ENCODE measurements at regions of chr19 and their contacts with region 1.

Region 1: DNA sequence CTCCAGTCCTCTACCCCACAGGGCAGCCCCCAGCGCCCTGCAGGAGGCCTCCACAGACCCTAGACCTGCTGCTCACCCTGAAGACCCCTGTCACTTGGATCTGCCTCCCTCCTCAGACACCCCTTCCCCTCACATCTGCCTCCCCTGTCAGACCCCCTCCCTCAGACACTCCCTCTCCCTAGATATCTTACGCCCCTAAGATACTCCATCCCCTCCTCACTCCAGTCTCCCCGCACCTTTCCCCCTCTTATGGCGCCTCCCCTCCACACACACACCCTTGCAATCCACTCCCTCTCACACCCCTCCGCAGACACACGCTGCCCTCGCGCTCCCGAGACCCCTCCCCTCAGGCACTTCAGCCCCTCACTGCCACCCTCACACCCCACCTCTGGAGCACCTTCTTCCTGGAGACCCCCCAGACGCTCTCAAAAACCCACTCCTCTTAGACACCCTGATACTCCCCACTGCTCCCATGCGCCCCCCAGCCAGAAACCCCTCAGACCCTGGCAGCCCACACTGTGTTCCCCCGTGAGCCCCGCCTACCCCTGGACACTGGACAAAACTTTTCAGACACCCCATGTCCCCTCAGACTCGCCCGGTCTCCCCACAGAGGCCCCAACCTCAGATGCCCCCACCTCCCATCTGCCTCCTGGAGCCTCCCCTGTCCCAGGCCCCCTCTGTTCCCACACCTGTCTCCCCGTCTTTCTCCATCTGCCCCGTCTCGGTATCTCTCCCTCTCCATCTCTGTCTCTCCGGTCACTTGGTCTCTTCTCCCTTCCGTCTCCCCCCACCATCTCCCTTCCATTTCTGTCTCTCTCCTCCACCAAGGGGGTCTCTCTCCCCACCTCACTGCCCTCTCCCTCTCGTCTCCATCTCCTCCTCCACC is 14.5 kb downstream of the ERFL start:
- DNase-seq: no peak
- ATAC-seq: no peak
- H3K4me3 Mint-ChIP-seq: no peak overlapping the region
- H3K27ac Mint-ChIP-seq: no peak overlapping the region
- H3K4me1 Mint-ChIP-seq: peaks cover 28% of the 10 kb centered on the region
- H3K27me3 Mint-ChIP-seq: peaks cover 23% of the 10 kb centered on the region

Region 2: DNA sequence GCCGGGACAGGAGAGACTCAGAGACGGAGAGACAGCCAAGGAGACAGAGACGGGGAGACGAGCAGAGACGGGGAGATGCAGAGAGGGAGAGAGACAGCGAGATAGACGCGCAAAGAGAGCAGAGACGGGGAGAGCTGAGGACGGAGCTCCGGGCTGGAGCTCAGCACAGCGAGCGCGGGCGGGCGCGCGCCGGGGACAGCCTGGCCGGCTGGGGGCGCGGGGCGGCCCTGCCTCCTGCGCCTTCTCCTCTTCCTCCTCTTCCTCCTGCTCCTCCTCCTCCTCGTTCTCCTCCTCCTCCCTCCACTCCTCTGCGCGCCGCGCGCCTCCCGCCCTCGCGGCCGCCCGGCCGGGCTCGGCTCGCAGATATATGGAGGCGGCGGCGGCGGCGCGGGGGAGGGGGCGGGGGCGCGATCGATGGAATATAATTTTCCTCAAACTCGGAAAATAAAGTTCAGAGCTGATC is 14.5 kb after region 1 on chr19 and contains the start of gene ERFL:
- CTCF ChIA-PET with region 1: no interaction called
- POLR2A ChIA-PET with region 1: no interaction called
- intact Hi-C with region 1: loop called in 1 of 2 experiments (anchors 2 kb)
- DNase-seq: peak; percentile 56
- ATAC-seq: peak; percentile 54
- H3K4me3 Mint-ChIP-seq: peak within 1 kb of the TSS; percentile 77
- H3K27ac Mint-ChIP-seq: peak within 1 kb of the TSS; percentile 81
- H3K4me1 Mint-ChIP-seq: peaks cover 20% of the 10 kb centered on the region
- H3K27me3 Mint-ChIP-seq: peaks cover 1% of the 10 kb centered on the region
- total RNA-seq, gene ERFL: 1.7 to 1.9 TPM

Region 3: GRCh38 chr19:41945135-41945766 is 31.5 kb after region 1 on chr19:
- CTCF ChIA-PET with region 1: no interaction called
- POLR2A ChIA-PET with region 1: no interaction called
- intact Hi-C with region 1: no loop called
- DNase-seq: peak; percentile 95
- ATAC-seq: peak; percentile 92
- H3K4me3 Mint-ChIP-seq: peak overlapping the region; percentile 41
- H3K27ac Mint-ChIP-seq: peak overlapping the region; percentile 96
- H3K4me1 Mint-ChIP-seq: peaks cover 50% of the 10 kb centered on the region
- H3K27me3 Mint-ChIP-seq: peaks cover 4% of the 10 kb centered on the region